ENCODE measurements at regions of chr1 and their contacts with region 1.

Region 1: DNA sequence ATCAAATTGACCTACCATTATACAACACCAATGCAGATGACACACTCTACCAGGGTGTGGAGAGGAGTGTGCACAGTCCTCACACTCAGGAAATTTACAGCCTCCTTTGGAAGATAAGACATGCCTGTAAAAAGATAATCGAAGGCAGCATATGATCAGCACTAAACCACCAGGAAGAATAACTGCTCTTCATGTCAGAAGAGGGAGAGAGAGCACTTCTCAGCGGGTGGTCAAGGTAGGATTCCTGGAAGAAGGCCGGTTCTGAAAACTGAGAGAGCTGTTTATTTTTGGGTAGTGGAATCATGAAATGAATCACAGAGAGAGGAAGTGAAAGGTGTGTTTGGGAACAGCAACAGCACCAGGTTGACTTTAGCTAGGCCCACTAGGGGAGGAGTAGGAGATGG is 14.0 kb upstream of the ZNF697 start:
- DNase-seq: no peak
- ATAC-seq: no peak
- H3K4me3 ChIP-seq: no peak overlapping the region
- H3K27ac ChIP-seq: no peak overlapping the region
- H3K4me1 ChIP-seq: no peaks in the 10 kb centered on the region
- H3K27me3 ChIP-seq: no peaks in the 10 kb centered on the region

Region 2: GRCh38 chr1:119613769-119614720 is 48.0 kb before region 1 on chr1:
- intact Hi-C with region 1: loop called (anchors 1 to 2 kb)
- DNase-seq: peak; percentile 86 to 91
- ATAC-seq: peak; percentile 90
- H3K4me3 ChIP-seq: no peak overlapping the region
- H3K27ac ChIP-seq: no peak overlapping the region
- H3K4me1 ChIP-seq: no peaks in the 10 kb centered on the region
- H3K27me3 ChIP-seq: no peaks in the 10 kb centered on the region